Mucosa of descending colon (tissue), 3 donors: ENCODE measurements at regions of chr3 and their contacts with region 1.

Region 1: GRCh38 chr3:187739561-187740332 is 5.5 kb downstream of the BCL6 start:
- DNase-seq: peak; percentile 77 to 89 (median 87)
- ATAC-seq: peak; percentile 49
- H3K4me3 ChIP-seq: peak overlapping the region; percentile 4
- H3K4me1 ChIP-seq: peaks cover 22% of the 10 kb centered on the region
- CTCF ChIP-seq: peak; percentile 96

Region 2: GRCh38 chr3:187291001-187291511 is 448.7 kb before region 1 on chr3:
- intact Hi-C with region 1: no loop called
- DNase-seq: no peak
- ATAC-seq: peak; percentile 31
- H3K4me3 ChIP-seq: no peak overlapping the region
- H3K4me1 ChIP-seq: peaks cover 5% of the 10 kb centered on the region
- CTCF ChIP-seq: no peak

Region 3: GRCh38 chr3:187586226-187586625 is 153.5 kb before region 1 on chr3:
- intact Hi-C with region 1: no loop called
- DNase-seq: no peak
- ATAC-seq: no peak
- H3K4me3 ChIP-seq: no peak overlapping the region
- H3K4me1 ChIP-seq: no peaks in the 10 kb centered on the region
- CTCF ChIP-seq: no peak

Region 4: DNA sequence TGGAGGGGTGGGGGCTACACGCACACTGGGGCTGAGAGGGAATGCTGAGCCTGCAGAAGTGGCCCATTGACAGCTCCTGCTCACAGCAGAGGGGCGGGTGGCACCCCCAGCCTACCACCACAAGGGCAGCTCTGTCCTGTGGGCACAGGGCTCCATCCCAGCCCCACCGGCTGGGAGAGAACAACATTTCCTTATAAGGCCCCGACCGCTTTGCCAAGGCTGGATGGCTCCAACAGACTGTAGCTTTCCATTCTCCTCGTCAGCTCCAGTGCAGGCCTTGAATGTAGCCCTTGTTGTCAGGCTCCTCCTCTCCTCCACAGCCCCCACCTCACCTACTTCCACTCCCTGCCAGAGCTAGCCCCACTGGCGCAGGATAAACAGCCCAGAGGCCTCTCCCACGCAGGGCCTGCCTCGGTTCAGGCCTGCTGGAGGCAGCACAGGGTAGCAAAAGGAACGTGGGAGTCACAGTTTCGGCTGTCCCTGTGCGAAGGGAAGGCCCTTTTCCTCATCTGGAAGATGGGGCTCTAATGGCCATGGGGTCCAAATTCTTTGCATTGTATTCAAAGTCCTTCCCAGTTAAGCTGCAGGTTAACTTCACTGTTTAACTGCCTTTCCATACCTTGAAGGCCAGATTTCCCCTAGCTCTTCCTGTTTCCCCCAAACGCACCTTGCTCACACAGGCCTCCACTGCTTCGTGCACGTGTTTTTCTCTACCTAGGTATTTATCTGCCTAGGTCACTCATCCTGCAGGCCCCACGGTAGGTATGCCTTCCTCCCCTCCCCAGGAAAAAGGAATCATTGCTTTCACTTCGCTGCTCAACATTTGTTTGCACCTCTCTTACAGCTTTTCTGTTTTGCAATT is 312.7 kb after region 1 on chr3:
- intact Hi-C with region 1: loop called in 1 of 2 experiments (anchors 5 kb)
- DNase-seq: peak; percentile 53 to 75 (median 62)
- ATAC-seq: peak; percentile 81
- H3K4me3 ChIP-seq: no peak overlapping the region
- H3K4me1 ChIP-seq: no peaks in the 10 kb centered on the region
- CTCF ChIP-seq: no peak

Region 5: GRCh38 chr3:188954590-188955208 is 1215.0 kb after region 1 on chr3:
- intact Hi-C with region 1: loop called (anchors 5 kb)
- DNase-seq: peak; percentile 76 to 83 (median 80)
- ATAC-seq: peak; percentile 80
- H3K4me3 ChIP-seq: no peak overlapping the region
- H3K4me1 ChIP-seq: peaks cover 7% of the 10 kb centered on the region
- CTCF ChIP-seq: peak; percentile 91